Activated CD4-positive, alpha-beta memory T cell treated with anti-CD3 and anti-CD28 coated beads, Interleukin-2, amount 10 ng/mL, durations not matched to agents 7 days and 5 days (primary cell): ENCODE measurements at regions of chr2 and their contacts with region 1.

Region 1: GRCh38 chr2:69643602-69644505 is at the start of gene AAK1:
- DNase-seq: peak; percentile 88
- H3K4me3 Mint-ChIP-seq: peak within 1 kb of the TSS; percentile 88
- H3K27ac Mint-ChIP-seq: peak within 1 kb of the TSS; percentile 99
- H3K4me1 Mint-ChIP-seq: peaks cover 60% of the 10 kb centered on the region
- H3K27me3 Mint-ChIP-seq: no peaks in the 10 kb centered on the region
- total RNA-seq, gene AAK1: 115 to 121 TPM

Region 2: GRCh38 chr2:69436938-69437750 is 206.7 kb before region 1 on chr2 and contains the start of gene NFU1:
- CTCF ChIA-PET with region 1: interaction called, 7 read pairs
- POLR2A ChIA-PET with region 1: interaction called, 15 read pairs
- DNase-seq: peak; percentile 88
- H3K4me3 Mint-ChIP-seq: peak within 1 kb of the TSS; percentile 94
- H3K27ac Mint-ChIP-seq: peak within 1 kb of the TSS; percentile 96
- H3K4me1 Mint-ChIP-seq: peaks cover 31% of the 10 kb centered on the region
- H3K27me3 Mint-ChIP-seq: no peaks in the 10 kb centered on the region
- total RNA-seq, gene NFU1: 24.4 to 30.7 TPM

Region 3: DNA sequence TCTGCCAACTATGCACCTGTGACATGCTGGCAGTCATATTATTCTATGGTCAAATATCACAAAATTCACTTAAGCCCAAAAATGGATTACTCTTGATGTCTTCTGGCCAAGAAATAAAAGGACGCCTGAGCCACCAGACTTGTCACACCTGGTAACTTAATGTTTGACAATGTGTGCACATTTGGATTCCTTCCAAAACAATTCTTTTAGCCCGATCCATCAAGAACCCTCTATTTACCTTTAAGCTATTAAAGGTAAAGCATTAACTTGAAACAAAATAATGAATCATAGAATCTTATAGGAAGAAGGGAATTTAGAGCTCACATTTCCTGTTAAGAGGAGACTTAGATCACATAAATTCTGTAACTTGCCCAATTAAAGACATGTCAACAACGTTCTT is 160.2 kb before region 1 on chr2:
- CTCF ChIA-PET with region 1: no interaction called
- POLR2A ChIA-PET with region 1: no interaction called
- DNase-seq: no peak
- H3K4me3 Mint-ChIP-seq: no peak overlapping the region
- H3K27ac Mint-ChIP-seq: no peak overlapping the region
- H3K4me1 Mint-ChIP-seq: peaks cover 7% of the 10 kb centered on the region
- H3K27me3 Mint-ChIP-seq: no peaks in the 10 kb centered on the region

Region 4: GRCh38 chr2:69581774-69582581 is 61.9 kb before region 1 on chr2:
- CTCF ChIA-PET with region 1: no interaction called
- POLR2A ChIA-PET with region 1: interaction called, 11 read pairs
- DNase-seq: no peak
- H3K4me3 Mint-ChIP-seq: peak overlapping the region; percentile 5
- H3K27ac Mint-ChIP-seq: no peak overlapping the region
- H3K4me1 Mint-ChIP-seq: peaks cover 73% of the 10 kb centered on the region
- H3K27me3 Mint-ChIP-seq: no peaks in the 10 kb centered on the region

Region 5: DNA sequence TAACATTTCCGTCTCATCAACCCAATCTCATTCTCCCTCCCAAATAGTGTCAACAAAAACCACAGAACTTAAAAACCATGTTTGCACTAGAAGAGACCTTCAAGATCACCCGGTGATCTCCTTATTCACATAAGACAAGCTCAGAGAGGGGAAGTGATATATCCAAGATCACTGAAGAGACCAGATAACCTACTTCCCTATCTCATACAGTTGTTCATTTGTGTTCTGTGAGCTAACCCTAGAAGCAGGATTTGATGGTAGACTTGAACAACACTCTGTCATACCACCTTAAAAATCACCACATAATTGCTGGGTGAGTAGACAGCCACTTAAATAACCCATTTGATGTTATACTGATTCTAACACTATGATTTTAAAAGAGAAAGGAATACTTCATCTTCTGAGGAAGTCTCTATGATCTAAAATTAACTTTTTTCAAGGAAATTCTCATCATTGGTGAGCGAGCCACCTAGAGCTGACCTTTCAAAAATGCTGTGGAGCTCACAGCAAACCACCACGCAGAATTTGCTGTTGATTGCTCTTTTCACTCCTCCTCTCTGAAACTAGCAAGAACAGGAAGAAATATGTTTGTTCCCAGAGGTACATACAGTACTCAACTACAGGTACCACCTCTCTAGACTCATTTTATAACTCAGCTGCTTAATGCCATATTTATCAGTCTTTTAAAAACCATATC is 15.4 kb before region 1 on chr2:
- CTCF ChIA-PET with region 1: interaction called, 9 read pairs
- POLR2A ChIA-PET with region 1: interaction called, 55 read pairs
- DNase-seq: no peak
- H3K4me3 Mint-ChIP-seq: no peak overlapping the region
- H3K27ac Mint-ChIP-seq: no peak overlapping the region
- H3K4me1 Mint-ChIP-seq: peaks cover 20% of the 10 kb centered on the region
- H3K27me3 Mint-ChIP-seq: no peaks in the 10 kb centered on the region

Region 6: DNA sequence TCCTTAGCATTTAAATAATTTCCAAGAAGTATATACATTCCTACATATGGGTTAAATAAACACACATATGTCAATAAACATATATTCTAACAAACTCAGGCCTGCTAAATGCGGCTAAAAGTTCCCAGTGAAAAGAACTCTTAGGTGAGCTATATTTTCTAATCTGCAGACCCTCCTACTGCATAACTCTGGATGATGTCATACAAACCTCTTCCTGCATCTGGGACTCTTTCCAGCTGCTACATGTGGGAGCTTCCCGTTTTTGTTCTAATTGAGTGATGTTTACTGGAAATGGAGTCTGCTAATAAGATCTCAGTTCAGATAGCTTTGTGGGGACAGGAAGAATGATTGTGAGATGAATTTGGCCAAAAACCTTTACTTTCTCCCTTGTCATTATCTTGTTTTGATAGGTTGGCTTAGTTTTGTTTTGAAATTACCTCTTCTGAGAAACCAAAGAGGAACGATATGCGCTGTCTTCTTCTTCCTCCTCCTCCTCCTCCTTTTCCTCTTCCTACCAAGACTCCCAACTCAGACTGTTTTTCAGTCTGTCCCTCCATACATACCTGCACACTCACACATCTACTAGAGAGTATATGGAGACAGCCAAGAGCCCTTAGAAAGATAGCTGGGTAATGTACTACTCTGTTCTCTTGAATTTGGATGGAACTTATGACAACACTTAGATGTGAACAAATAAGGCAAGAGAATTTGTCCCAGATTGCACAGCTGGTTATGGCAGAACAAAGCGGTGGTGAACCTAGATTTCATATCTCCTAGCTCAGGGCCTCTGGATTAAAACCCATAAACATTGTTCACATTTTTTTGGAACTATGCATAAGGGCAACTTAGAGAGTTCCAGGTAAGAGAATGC is 39.5 kb after region 1 on chr2:
- CTCF ChIA-PET with region 1: interaction called, 7 read pairs
- POLR2A ChIA-PET with region 1: interaction called, 22 read pairs
- DNase-seq: no peak
- H3K4me3 Mint-ChIP-seq: peak overlapping the region; percentile 12
- H3K27ac Mint-ChIP-seq: peak overlapping the region; percentile 63
- H3K4me1 Mint-ChIP-seq: peaks cover 60% of the 10 kb centered on the region
- H3K27me3 Mint-ChIP-seq: no peaks in the 10 kb centered on the region

Region 7: GRCh38 chr2:69716555-69717114 is 72.8 kb after region 1 on chr2:
- CTCF ChIA-PET with region 1: interaction called, 23 read pairs
- POLR2A ChIA-PET with region 1: interaction called, 7 read pairs
- DNase-seq: no peak
- H3K4me3 Mint-ChIP-seq: no peak overlapping the region
- H3K27ac Mint-ChIP-seq: no peak overlapping the region
- H3K4me1 Mint-ChIP-seq: peaks cover 15% of the 10 kb centered on the region
- H3K27me3 Mint-ChIP-seq: no peaks in the 10 kb centered on the region